ENCODE measurements at regions of chr1 and their contacts with region 1.

Region 1: GRCh38 chr1:244672946-244673682 is 20.2 kb downstream of the DESI2 start:
- DNase-seq: peak; percentile 28
- H3K4me3 ChIP-seq: no peak overlapping the region
- H3K27me3 ChIP-seq: no peaks in the 10 kb centered on the region
- CTCF ChIP-seq: no peak

Region 2: DNA sequence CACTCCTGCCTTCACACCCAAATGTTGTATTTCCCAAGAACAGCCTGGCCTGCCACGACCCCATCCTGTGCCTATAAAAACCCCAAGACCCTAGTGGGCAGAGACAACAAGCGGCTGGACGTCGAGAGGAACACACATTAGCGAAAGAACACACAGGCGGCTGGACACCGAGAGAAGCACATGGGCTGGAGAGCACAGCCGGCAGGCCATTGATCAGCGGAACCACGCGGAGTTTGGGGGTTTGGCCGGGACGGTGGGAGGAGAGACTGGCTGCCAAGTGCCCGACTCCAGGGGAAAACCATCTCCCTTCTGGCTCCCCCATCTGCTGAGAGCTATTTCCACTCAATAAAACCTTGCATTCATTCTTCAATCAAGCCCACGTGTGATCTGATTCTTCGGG is 30.6 kb before region 1 on chr1:
- CTCF ChIA-PET with region 1: no interaction called
- POLR2A ChIA-PET with region 1: no interaction called
- DNase-seq: no peak
- H3K4me3 ChIP-seq: no peak overlapping the region
- H3K27me3 ChIP-seq: no peaks in the 10 kb centered on the region; the same call in 1 of the 2 replicates
- CTCF ChIP-seq: no peak

Region 3: DNA sequence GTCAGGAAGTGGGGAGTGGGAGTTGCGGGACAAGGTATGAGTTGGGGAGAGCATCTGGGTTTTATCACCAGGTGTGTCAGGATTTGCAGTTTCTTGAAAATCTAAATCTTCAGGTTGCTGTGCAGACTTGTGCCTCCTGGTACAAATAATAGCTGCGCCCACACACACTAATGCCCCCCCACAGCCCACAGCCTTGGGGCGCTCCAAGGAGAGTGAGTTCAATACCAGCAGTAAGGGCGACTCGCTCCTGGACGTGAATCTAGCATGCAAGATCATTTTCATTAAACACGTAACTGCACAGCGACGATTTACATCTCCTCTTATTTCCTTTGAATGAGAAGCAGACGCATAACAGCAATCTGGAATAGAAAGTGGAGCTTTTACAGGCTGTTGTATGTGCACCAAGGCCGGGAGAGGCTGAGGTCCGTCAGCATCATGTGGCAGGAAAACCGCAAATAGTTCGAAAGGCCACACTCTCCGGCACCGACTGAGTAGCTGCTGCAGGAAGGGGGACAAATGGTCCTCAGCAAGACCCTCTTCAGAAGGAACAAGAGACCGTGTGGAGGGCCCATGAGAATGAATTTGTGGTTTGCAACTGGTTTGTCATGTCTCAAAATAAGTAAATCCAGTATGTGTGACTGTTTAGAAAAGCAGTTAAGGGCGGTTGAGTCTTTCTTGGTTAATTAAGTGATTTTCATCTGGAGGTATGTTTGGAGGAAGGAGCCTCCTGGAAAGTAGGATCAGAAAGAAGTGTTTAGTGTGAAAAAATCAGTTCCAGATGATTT is 1394.5 kb after region 1 on chr1:
- CTCF ChIA-PET with region 1: no interaction called
- POLR2A ChIA-PET with region 1: interaction called, 14 read pairs
- DNase-seq: peak; percentile 44
- H3K4me3 ChIP-seq: no peak overlapping the region; the same call in 1 of the 2 replicates
- H3K27me3 ChIP-seq: no peaks in the 10 kb centered on the region
- CTCF ChIP-seq: no peak

Measured in BJ (cell line).